Activated CD8-positive, alpha-beta T cell treated with anti-CD3 and anti-CD28 coated beads, Interleukin-2, amount 10 ng/mL, durations not matched to agents 7 days and 5 days (primary cell): ENCODE measurements at regions of chr12 and their contacts with region 1.

Region 1: GRCh38 chr12:12630850-12631249 is 19.2 kb downstream of the CREBL2 start:
- DNase-seq: no peak
- ATAC-seq: no peak
- H3K4me3 Mint-ChIP-seq: no peak overlapping the region
- H3K27ac Mint-ChIP-seq: no peak overlapping the region
- H3K4me1 Mint-ChIP-seq: peaks cover 23% of the 10 kb centered on the region
- H3K27me3 Mint-ChIP-seq: no peaks in the 10 kb centered on the region

Region 2: GRCh38 chr12:12645485-12645884 is 14.6 kb after region 1 on chr12:
- CTCF ChIA-PET with region 1: interaction called, 21 read pairs
- POLR2A ChIA-PET with region 1: no interaction called
- DNase-seq: peak; percentile 46
- ATAC-seq: peak; percentile 83
- H3K4me3 Mint-ChIP-seq: no peak overlapping the region
- H3K27ac Mint-ChIP-seq: no peak overlapping the region
- H3K4me1 Mint-ChIP-seq: peaks cover 6% of the 10 kb centered on the region
- H3K27me3 Mint-ChIP-seq: no peaks in the 10 kb centered on the region

Region 3: DNA sequence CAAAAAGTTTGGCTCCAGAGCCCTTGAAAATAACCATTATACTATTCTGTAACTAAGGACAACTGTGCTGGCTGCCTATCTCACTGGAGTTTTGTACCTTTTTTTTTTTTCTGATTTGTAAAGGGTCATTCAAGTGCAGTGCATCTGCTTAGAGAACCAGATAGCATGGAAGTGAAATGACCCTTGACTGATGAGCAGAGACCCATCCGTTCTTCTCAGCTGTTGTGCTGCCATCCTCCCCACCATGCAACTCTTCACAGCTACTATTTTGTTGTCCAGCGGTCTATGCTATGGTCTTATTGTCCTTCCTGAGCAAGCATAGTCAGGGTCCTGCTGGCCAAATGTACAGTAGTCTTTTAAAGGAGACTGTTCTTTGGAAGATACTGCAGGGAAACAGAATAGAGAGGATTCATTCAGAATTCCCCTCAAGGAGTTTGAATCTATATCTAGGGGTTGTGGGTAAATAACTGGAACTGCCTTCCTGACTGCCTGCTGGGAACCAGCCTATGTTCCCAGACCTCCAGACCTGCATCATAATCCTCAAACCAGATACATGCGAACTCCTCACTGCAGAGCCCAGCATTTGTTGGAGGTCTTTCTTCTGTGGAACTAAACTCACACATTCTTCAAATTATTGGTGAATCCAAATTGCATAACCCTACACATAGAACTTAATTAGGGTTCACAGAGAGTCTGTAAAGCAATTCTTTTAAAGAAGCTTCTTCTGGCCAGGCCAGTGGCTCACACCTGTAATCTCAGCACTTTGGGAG is 24.0 kb after region 1 on chr12:
- CTCF ChIA-PET with region 1: interaction called, 14 read pairs
- POLR2A ChIA-PET with region 1: interaction called, 3 read pairs
- DNase-seq: no peak
- ATAC-seq: no peak
- H3K4me3 Mint-ChIP-seq: no peak overlapping the region
- H3K27ac Mint-ChIP-seq: no peak overlapping the region
- H3K4me1 Mint-ChIP-seq: peaks cover 8% of the 10 kb centered on the region
- H3K27me3 Mint-ChIP-seq: no peaks in the 10 kb centered on the region

Region 4: GRCh38 chr12:12909228-12909994 is 278.6 kb after region 1 on chr12:
- CTCF ChIA-PET with region 1: no interaction called
- POLR2A ChIA-PET with region 1: no interaction called
- DNase-seq: no peak
- ATAC-seq: peak; percentile 44
- H3K4me3 Mint-ChIP-seq: no peak overlapping the region
- H3K27ac Mint-ChIP-seq: no peak overlapping the region
- H3K4me1 Mint-ChIP-seq: peaks cover 21% of the 10 kb centered on the region
- H3K27me3 Mint-ChIP-seq: peaks cover 4% of the 10 kb centered on the region